ENCODE measurements at regions of chr2 and their contacts with region 1.

Region 1: GRCh38 chr2:68734688-68735525 is at the start of gene ARHGAP25:
- DNase-seq: peak in 10 of 14 experiments; percentile 23 to 87 (median 45)
- ATAC-seq: peak; percentile 71
- H3K4me3 ChIP-seq: peak within 1 kb of the TSS; percentile 73
- H3K4me3 Mint-ChIP-seq: no peak within 1 kb of the TSS
- H3K27ac ChIP-seq: peak within 1 kb of the TSS; percentile 72 to 81
- H3K27ac Mint-ChIP-seq: no peak within 1 kb of the TSS
- H3K4me1 ChIP-seq: peaks cover 49% of the 10 kb centered on the region
- H3K4me1 Mint-ChIP-seq: peaks cover 40% of the 10 kb centered on the region
- H3K27me3 ChIP-seq: no peaks in the 10 kb centered on the region
- H3K27me3 Mint-ChIP-seq: no peaks in the 10 kb centered on the region
- CTCF ChIP-seq: no peak
- total RNA-seq, gene ARHGAP25: 39.3 to 41.8 TPM

Region 2: DNA sequence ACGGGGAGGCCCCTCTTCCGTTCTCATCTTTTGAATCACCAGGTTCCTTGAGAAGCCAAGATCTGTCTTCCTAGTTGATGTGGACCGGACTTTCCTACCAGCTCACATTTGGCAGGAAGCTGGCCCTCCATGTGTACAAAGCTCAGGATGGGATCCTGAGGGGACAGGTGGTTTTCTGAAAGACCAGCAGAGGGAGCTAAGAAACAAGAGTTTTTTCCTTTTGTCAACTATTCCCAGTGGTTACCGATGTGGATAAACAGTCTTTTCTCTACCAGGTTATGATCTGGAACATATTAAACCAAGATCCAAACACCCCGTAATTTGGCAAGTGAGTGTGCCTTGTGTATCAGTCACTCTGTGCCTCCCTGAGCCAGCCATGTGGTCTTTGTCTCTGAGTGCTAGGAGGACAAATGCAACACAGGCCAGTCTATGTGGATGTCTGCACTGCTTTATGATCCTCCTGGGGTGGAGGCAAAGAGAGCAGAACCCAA is 25.4 kb before region 1 on chr2:
- CTCF ChIA-PET with region 1: interaction called, 11 read pairs
- POLR2A ChIA-PET with region 1: interaction called, 3 read pairs
- intact Hi-C with region 1: no loop called
- DNase-seq: peak in 4 of 14 experiments; percentile 36 to 62 (median 58)
- ATAC-seq: peak; percentile 77
- H3K4me3 ChIP-seq: no peak overlapping the region
- H3K4me3 Mint-ChIP-seq: no peak overlapping the region
- H3K27ac ChIP-seq: no peak overlapping the region
- H3K27ac Mint-ChIP-seq: no peak overlapping the region
- H3K4me1 ChIP-seq: peaks cover 6% of the 10 kb centered on the region
- H3K4me1 Mint-ChIP-seq: peaks cover 28% of the 10 kb centered on the region
- H3K27me3 ChIP-seq: no peaks in the 10 kb centered on the region
- H3K27me3 Mint-ChIP-seq: no peaks in the 10 kb centered on the region
- CTCF ChIP-seq: peak; percentile 92

Region 3: DNA sequence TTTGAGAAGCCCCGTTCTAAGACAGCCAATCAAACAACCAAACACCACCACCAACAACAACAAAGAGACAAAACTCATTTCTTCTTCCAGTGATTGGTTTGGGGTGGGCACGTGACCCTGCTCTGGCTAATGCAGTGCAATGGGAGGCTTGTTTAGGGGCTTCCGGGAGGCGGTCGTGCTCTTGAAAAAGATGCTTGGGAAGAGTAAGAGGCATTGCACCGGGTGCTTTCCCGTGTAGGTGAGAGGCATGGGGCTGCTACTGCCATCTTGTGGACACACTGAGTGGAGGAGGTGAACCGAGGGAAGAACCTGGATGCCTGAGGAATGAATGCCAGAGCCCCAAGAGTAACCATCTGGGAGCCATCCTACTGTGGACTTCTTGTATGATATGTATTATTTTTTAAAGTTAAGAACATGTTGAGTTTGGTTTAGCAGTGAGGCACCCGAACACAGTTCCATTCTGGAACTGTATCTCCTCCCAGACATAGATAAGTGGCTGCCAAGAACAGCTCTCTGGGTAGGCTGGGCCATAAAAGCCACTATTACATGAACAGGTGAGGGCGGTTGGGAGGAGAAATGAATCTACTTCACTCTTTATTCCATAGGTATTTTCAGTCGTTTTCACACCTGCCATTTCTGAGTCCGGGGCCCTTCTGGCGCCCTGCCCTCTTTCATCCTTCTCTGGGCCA is 19.4 kb before region 1 on chr2:
- CTCF ChIA-PET with region 1: interaction called, 10 read pairs
- POLR2A ChIA-PET with region 1: interaction called, 79 read pairs
- intact Hi-C with region 1: loop called (anchors 2 kb)
- DNase-seq: peak in 4 of 14 experiments; percentile 40 to 78 (median 67)
- ATAC-seq: peak; percentile 44
- H3K4me3 ChIP-seq: no peak overlapping the region
- H3K4me3 Mint-ChIP-seq: no peak overlapping the region
- H3K27ac ChIP-seq: peak overlapping the region in 1 of 2 donors; percentile 65
- H3K27ac Mint-ChIP-seq: peak overlapping the region; percentile 83
- H3K4me1 ChIP-seq: peaks cover 51% of the 10 kb centered on the region
- H3K4me1 Mint-ChIP-seq: peaks cover 82% of the 10 kb centered on the region
- H3K27me3 ChIP-seq: no peaks in the 10 kb centered on the region
- H3K27me3 Mint-ChIP-seq: no peaks in the 10 kb centered on the region
- CTCF ChIP-seq: no peak

Region 4: GRCh38 chr2:68721482-68722101 is 13.3 kb before region 1 on chr2:
- CTCF ChIA-PET with region 1: interaction called, 10 read pairs
- POLR2A ChIA-PET with region 1: interaction called, 79 read pairs
- intact Hi-C with region 1: loop called (anchors 2 kb)
- DNase-seq: peak in 6 of 14 experiments; percentile 25 to 82 (median 68)
- ATAC-seq: peak; percentile 83
- H3K4me3 ChIP-seq: peak overlapping the region; percentile 19
- H3K4me3 Mint-ChIP-seq: peak overlapping the region; percentile 82
- H3K27ac ChIP-seq: peak overlapping the region; percentile 72 to 76
- H3K27ac Mint-ChIP-seq: peak overlapping the region; percentile 83
- H3K4me1 ChIP-seq: peaks cover 88% of the 10 kb centered on the region
- H3K4me1 Mint-ChIP-seq: peaks cover 96% of the 10 kb centered on the region
- H3K27me3 ChIP-seq: no peaks in the 10 kb centered on the region
- H3K27me3 Mint-ChIP-seq: no peaks in the 10 kb centered on the region
- CTCF ChIP-seq: no peak

Region 5: DNA sequence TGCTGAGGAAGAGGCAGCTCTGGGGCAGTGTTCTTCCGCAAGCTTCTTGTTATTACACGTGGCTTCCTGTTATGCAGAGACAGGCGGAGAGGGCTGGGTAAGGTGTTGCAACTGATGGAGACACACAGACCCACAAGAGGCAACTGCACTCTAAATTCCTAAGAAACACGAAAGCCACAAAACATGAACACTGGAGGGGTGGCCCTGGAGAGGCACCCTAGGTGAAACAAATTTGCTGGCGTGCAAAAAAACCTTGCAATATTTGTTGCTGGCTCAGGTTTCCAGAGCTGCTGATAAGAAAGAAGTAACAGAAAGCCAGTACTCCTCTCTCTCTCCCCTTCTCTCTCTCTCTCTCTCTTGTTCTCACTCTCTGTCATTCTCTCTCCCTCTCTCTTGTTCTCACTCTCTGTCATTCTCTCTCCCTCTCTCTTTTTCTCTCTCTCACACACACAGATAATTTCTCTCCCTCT is 31.5 kb after region 1 on chr2:
- CTCF ChIA-PET with region 1: interaction called, 5 read pairs
- POLR2A ChIA-PET with region 1: interaction called, 67 read pairs
- intact Hi-C with region 1: loop called in 1 of 2 experiments (anchors 2 kb)
- DNase-seq: peak; percentile 48 to 89 (median 66)
- ATAC-seq: peak; percentile 71
- H3K4me3 ChIP-seq: peak overlapping the region; percentile 42
- H3K4me3 Mint-ChIP-seq: peak overlapping the region; percentile 84
- H3K27ac ChIP-seq: peak overlapping the region; percentile 89 to 93
- H3K27ac Mint-ChIP-seq: peak overlapping the region; percentile 94
- H3K4me1 ChIP-seq: peaks cover 83% of the 10 kb centered on the region
- H3K4me1 Mint-ChIP-seq: peaks cover 98% of the 10 kb centered on the region
- H3K27me3 ChIP-seq: no peaks in the 10 kb centered on the region
- H3K27me3 Mint-ChIP-seq: no peaks in the 10 kb centered on the region
- CTCF ChIP-seq: no peak

Region 6: DNA sequence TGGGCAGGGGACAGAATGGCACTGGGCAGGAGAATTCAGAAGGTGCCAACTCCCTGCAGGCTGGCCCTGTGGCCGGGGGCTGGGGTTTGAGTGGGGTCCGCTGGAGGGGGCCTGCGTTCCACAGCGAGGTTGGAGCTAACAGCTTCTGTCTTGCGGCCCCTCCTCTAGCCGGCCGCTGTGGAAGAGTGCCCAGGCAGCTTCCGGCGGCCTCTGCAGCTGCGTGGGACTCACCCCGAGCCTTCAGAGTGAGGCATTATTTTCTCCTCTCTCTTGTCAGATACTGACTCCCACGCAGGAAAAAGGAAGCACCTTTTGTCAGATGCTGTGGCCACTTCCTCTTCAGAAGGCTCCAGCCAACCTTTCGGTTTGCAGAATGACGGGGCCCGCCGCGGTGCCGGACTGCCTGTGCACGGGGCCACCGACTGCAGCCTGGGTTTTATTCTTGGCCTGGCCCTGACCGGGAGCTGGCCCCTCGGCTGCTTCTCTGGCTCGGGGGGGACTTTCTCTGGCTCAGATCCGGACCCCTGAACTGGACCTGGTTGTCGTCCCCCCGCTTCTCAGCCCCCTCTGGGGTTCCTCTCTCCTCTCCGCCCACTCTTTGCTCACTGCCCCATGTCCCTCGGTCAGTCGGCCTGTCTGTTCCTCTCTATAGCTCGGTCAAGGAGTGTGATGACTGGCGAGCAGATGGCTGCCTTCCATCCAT is 39.8 kb after region 1 on chr2:
- CTCF ChIA-PET with region 1: interaction called, 3 read pairs
- POLR2A ChIA-PET with region 1: interaction called, 11 read pairs
- intact Hi-C with region 1: no loop called
- DNase-seq: peak in 12 of 14 experiments; percentile 26 to 87 (median 48)
- ATAC-seq: peak; percentile 59
- H3K4me3 ChIP-seq: peak overlapping the region; percentile 66
- H3K4me3 Mint-ChIP-seq: peak overlapping the region; percentile 88
- H3K27ac ChIP-seq: peak overlapping the region; percentile 81 to 89
- H3K27ac Mint-ChIP-seq: peak overlapping the region; percentile 94
- H3K4me1 ChIP-seq: peaks cover 86% of the 10 kb centered on the region
- H3K4me1 Mint-ChIP-seq: peaks cover 91% of the 10 kb centered on the region
- H3K27me3 ChIP-seq: no peaks in the 10 kb centered on the region
- H3K27me3 Mint-ChIP-seq: no peaks in the 10 kb centered on the region
- CTCF ChIP-seq: no peak

Region 7: DNA sequence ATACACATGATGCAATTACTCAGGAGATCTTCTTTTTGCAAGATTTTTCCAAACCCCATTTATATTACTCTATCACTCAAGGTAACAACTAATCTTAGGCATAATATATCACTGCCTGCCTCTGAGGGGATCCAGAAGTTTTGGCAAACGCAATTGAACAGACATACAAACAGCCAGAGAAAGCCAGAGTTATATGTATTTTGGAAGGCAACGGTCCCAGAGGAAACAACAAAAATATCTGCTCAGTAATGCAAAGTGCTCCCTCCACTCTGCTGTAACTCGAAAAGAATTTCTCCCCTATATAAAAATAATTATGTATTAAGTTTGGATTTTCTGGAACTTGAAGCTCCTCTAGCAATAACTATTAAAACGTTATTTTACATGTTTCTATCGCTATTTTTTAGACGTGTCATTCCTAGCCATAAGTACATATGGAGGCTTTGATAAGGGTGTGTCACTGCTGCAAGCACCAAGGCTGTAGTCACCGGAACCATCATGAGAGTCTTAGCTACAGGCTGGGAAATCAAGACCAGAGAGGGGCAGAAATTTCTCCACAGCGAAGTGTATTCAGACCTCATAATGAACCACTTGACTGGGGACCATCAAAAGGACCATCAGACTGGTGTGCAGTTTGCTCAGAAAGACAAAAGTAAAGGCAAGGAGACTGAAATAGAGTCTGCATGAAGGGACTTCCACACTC is 235.8 kb after region 1 on chr2:
- CTCF ChIA-PET with region 1: no interaction called
- POLR2A ChIA-PET with region 1: no interaction called
- intact Hi-C with region 1: no loop called
- DNase-seq: no peak
- ATAC-seq: no peak
- H3K4me3 ChIP-seq: no peak overlapping the region
- H3K4me3 Mint-ChIP-seq: no peak overlapping the region
- H3K27ac ChIP-seq: no peak overlapping the region
- H3K27ac Mint-ChIP-seq: no peak overlapping the region
- H3K4me1 ChIP-seq: no peaks in the 10 kb centered on the region
- H3K4me1 Mint-ChIP-seq: no peaks in the 10 kb centered on the region
- H3K27me3 ChIP-seq: peaks cover 0 to 11% of the 10 kb centered on the region in 2 experiments
- H3K27me3 Mint-ChIP-seq: peaks cover 9% of the 10 kb centered on the region
- CTCF ChIP-seq: no peak

Measured in CD4-positive, alpha-beta T cell (primary cell).